PC-9 (cell line): ENCODE measurements at regions of chr5 and their contacts with region 1.

Region 1: GRCh38 chr5:1048861-1049838 is 40.5 kb downstream of the NKD2 start:
- DNase-seq: no peak
- H3K4me3 ChIP-seq: no peak overlapping the region
- H3K27ac ChIP-seq: no peak overlapping the region
- H3K4me1 ChIP-seq: no peaks in the 10 kb centered on the region
- H3K27me3 ChIP-seq: no peaks in the 10 kb centered on the region
- CTCF ChIP-seq: no peak

Region 2: DNA sequence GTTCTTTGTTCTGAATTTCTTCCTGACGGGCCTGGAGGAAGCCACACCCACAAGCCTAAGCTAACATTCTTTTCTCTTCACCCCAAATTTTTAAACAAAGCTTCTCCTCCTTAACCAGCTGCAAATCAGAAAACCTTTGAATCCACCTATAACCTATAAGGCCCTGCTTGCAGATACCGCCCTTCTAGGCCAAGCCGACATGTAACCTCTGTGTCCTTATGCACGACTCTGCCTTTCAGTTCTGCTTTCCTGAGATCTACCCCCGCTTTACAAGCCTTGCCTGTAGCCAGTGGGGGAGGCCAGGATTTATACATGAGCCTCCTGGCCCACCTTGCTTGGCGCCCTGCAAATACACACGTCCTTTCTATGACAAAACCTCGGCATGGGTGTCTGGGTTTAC is 175.8 kb before region 1 on chr5:
- CTCF ChIA-PET with region 1: no interaction called
- POLR2A ChIA-PET with region 1: interaction called, 12 read pairs
- intact Hi-C with region 1: no loop called
- DNase-seq: no peak
- H3K4me3 ChIP-seq: no peak overlapping the region
- H3K27ac ChIP-seq: no peak overlapping the region
- H3K4me1 ChIP-seq: no peaks in the 10 kb centered on the region
- H3K27me3 ChIP-seq: no peaks in the 10 kb centered on the region
- CTCF ChIP-seq: no peak

Region 3: DNA sequence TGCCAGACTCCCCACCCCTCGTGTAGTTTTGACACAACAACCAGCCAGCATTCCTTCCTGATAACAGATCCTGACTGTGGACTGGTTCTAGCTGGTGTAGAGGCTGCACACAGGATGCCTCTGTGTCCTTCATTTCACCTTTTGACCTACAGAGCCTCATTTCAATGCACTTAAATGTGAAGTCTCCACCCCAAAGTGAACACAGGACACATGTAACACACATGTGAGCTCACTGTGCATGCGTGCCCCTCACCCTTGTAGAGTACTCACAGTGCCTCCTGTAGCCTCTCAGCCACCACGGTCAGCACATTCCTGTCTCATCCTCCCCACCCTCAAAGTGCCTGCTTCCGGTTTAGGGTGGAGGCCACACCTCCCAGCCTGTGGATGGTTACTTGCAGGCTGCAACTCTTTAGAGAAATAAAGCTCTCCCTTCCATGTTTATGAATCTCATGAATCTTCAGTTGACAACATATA is 52.1 kb before region 1 on chr5:
- CTCF ChIA-PET with region 1: no interaction called
- POLR2A ChIA-PET with region 1: no interaction called
- intact Hi-C with region 1: no loop called
- DNase-seq: no peak
- H3K4me3 ChIP-seq: no peak overlapping the region
- H3K27ac ChIP-seq: no peak overlapping the region
- H3K4me1 ChIP-seq: peaks cover 8% of the 10 kb centered on the region
- H3K27me3 ChIP-seq: peaks cover 84% of the 10 kb centered on the region
- CTCF ChIP-seq: no peak

Region 4: GRCh38 chr5:1246711-1247431 is 197.7 kb after region 1 on chr5:
- CTCF ChIA-PET with region 1: no interaction called
- POLR2A ChIA-PET with region 1: no interaction called
- intact Hi-C with region 1: no loop called
- DNase-seq: peak in 1 of 2 experiments; percentile 58
- H3K4me3 ChIP-seq: no peak overlapping the region
- H3K27ac ChIP-seq: no peak overlapping the region
- H3K4me1 ChIP-seq: no peaks in the 10 kb centered on the region
- H3K27me3 ChIP-seq: peaks cover 94% of the 10 kb centered on the region
- CTCF ChIP-seq: no peak